ENCODE measurements at regions of chrX and their contacts with region 1.

Region 1: GRCh38 chrX:54044126-54044876 is at the start of gene PHF8:
- DNase-seq: peak; percentile 93 to 95
- ATAC-seq: peak; percentile 81 to 94 (median 84)
- H3K4me3 ChIP-seq: peak within 1 kb of the TSS; percentile 83
- H3K4me3 Mint-ChIP-seq: peak within 1 kb of the TSS; percentile 95
- H3K27ac ChIP-seq: peak within 1 kb of the TSS; percentile 92
- H3K27ac Mint-ChIP-seq: peak within 1 kb of the TSS; percentile 91 to 94
- H3K4me1 ChIP-seq: peaks cover 18% of the 10 kb centered on the region
- H3K4me1 Mint-ChIP-seq: peaks cover 8 to 13% of the 10 kb centered on the region in 2 donors
- H3K27me3 ChIP-seq: no peaks in the 10 kb centered on the region
- H3K27me3 Mint-ChIP-seq: no peaks in the 10 kb centered on the region
- CTCF ChIP-seq: no peak
- total RNA-seq, gene PHF8: 55.4 to 74.1 (median 72.6) TPM

Region 2: DNA sequence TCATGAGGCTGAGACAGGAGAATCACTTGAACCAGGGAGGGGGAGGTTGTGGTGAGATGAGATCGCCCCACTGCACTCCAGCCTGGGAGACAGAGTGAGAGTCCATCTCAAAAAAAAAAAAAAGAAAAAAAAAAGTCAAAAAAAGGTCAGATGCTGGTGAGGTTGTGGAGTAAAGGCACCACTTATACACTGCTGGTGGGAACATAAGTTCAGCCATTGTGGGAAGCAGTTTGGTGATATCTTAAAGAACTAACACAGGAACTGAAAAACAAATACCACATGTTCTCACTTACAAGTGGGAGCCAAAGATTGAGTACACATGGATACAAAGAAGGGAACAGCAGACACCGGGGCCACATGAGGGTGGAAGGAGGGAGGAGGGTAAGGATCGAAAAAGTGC is 149.0 kb before region 1 on chrX:
- intact Hi-C with region 1: no loop called
- DNase-seq: no peak
- ATAC-seq: no peak
- H3K4me3 ChIP-seq: no peak overlapping the region
- H3K4me3 Mint-ChIP-seq: no peak overlapping the region
- H3K27ac ChIP-seq: no peak overlapping the region
- H3K27ac Mint-ChIP-seq: no peak overlapping the region
- H3K4me1 ChIP-seq: no peaks in the 10 kb centered on the region
- H3K4me1 Mint-ChIP-seq: no peaks in the 10 kb centered on the region
- H3K27me3 ChIP-seq: no peaks in the 10 kb centered on the region
- H3K27me3 Mint-ChIP-seq: peaks cover 0 to 3% of the 10 kb centered on the region in 2 donors
- CTCF ChIP-seq: no peak

Region 3: GRCh38 chrX:54439967-54440871 is 395.9 kb after region 1 on chrX and contains the start of gene TSR2:
- intact Hi-C with region 1: loop called (anchors 10 kb)
- DNase-seq: peak; percentile 75 to 87
- ATAC-seq: peak; percentile 95 to 99 (median 97)
- H3K4me3 ChIP-seq: peak within 1 kb of the TSS; percentile 99
- H3K4me3 Mint-ChIP-seq: peak within 1 kb of the TSS; percentile 99
- H3K27ac ChIP-seq: peak within 1 kb of the TSS; percentile 73
- H3K27ac Mint-ChIP-seq: peak within 1 kb of the TSS; percentile 87 to 99
- H3K4me1 ChIP-seq: peaks cover 20% of the 10 kb centered on the region
- H3K4me1 Mint-ChIP-seq: peaks cover 14 to 37% of the 10 kb centered on the region in 2 donors
- H3K27me3 ChIP-seq: no peaks in the 10 kb centered on the region
- H3K27me3 Mint-ChIP-seq: peaks cover 3 to 16% of the 10 kb centered on the region in 2 donors
- CTCF ChIP-seq: no peak
- total RNA-seq, gene TSR2: 39.0 to 40.4 (median 40.0) TPM

Measured in natural killer cell (primary cell).